Heart left ventricle (tissue), 16 donors: ENCODE measurements at regions of chr2 and their contacts with region 1.

Region 1: GRCh38 chr2:30346471-30347169 is 100.4 kb upstream of the LCLAT1 start:
- DNase-seq: peak; percentile 85 to 92 (median 88)
- ATAC-seq: peak; percentile 96 to 98 (median 96)
- H3K4me3 ChIP-seq: peak overlapping the region; percentile 5 to 63 (median 54)
- H3K27ac ChIP-seq: peak overlapping the region; percentile 69 to 96 (median 86)
- H3K4me1 ChIP-seq: peaks cover 8 to 55% (median 37%) of the 10 kb centered on the region in 12 donors
- H3K27me3 ChIP-seq: no peaks in the 10 kb centered on the region
- CTCF ChIP-seq: no peak
- POLR2A ChIP-seq: peak in 1 of 2 donors; percentile 69

Region 2: DNA sequence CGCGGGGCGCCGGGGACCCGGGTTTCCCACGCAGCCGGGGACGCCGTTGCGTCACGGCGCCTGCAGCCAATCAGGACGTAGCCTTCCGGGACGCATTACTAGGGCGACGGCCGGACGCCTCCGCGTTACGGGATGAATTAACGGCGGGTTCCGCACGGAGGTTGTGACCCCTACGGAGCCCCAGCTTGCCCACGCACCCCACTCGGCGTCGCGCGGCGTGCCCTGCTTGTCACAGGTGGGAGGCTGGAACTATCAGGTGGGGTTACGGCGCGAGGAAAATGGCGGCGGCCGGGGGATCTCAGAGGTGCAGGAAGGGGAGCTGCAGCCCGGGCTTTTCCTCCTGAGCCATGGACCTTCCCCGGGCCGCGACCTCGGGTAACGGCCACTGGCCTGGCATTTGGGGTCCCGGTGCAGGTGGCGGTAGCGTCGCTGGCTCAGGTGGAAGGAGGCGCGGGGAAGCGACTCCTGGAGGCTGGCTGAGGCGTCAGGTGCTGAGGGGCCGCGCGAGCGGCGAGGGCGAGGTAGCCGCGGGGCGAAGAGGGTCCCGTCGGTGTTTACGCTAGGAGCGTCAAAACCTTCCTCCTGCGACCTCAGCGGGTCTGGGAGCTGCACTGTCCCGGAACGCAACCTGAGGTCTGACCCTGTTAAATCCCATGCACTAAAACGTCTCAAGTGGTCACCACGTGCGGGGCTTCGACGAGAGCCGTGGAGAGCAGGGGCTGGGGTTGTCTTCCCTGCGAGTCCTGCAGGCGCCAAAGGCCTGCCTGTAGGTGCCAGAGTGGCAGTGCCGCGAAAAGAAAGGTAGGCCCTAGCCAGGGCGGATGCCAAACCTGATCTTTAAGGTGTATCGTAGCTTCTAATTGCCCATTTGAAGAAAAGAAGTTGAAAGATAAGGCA is 100.8 kb after region 1 on chr2 and contains the start of gene LCLAT1:
- intact Hi-C with region 1: loop called in 2 of 10 experiments (anchors 5 to 10 kb)
- DNase-seq: peak; percentile 87 to 93 (median 87)
- ATAC-seq: peak; percentile 84 to 98 (median 98)
- H3K4me3 ChIP-seq: peak within 1 kb of the TSS; percentile 68 to 99 (median 91)
- H3K27ac ChIP-seq: peak within 1 kb of the TSS; percentile 49 to 91 (median 86)
- H3K4me1 ChIP-seq: peaks cover 0 to 30% (median 13%) of the 10 kb centered on the region in 12 donors
- H3K27me3 ChIP-seq: no peaks in the 10 kb centered on the region
- CTCF ChIP-seq: peak in 3 of 12 donors; percentile 8 to 20 (median 10)
- POLR2A ChIP-seq: peak in 1 of 2 donors; percentile 59
- total RNA-seq, gene LCLAT1: 32.6 to 70.2 (median 46.9) TPM